Caco-2 (cell line): ENCODE measurements at regions of chr4 and their contacts with region 1.

Region 1: GRCh38 chr4:77075869-77076799 is at the start of gene CCNI:
- DNase-seq: peak; percentile 94 to 95
- H3K4me3 ChIP-seq: peak within 1 kb of the TSS; percentile 66
- H3K4me3 Mint-ChIP-seq: no peak within 1 kb of the TSS
- H3K27ac Mint-ChIP-seq: no peak within 1 kb of the TSS
- H3K4me1 ChIP-seq: peaks cover 20% of the 10 kb centered on the region
- H3K4me1 Mint-ChIP-seq: peaks cover 6% of the 10 kb centered on the region
- H3K27me3 ChIP-seq: no peaks in the 10 kb centered on the region
- H3K27me3 Mint-ChIP-seq: no peaks in the 10 kb centered on the region
- CTCF ChIP-seq: no peak
- total RNA-seq, gene CCNI: 153 and 164 TPM in 2 replicates

Region 2: GRCh38 chr4:77052352-77052751 is 23.8 kb before region 1 on chr4:
- CTCF ChIA-PET with region 1: interaction called, 6 read pairs
- POLR2A ChIA-PET with region 1: interaction called, 4 read pairs
- intact Hi-C with region 1: loop called (anchors 2 kb)
- DNase-seq: peak; percentile 61 to 70
- H3K4me3 ChIP-seq: no peak overlapping the region
- H3K4me3 Mint-ChIP-seq: no peak overlapping the region
- H3K27ac Mint-ChIP-seq: peak overlapping the region; percentile 32
- H3K4me1 ChIP-seq: no peaks in the 10 kb centered on the region
- H3K4me1 Mint-ChIP-seq: no peaks in the 10 kb centered on the region
- H3K27me3 ChIP-seq: no peaks in the 10 kb centered on the region
- H3K27me3 Mint-ChIP-seq: no peaks in the 10 kb centered on the region
- CTCF ChIP-seq: peak; percentile 49 to 77